ENCODE measurements at regions of chr16 and their contacts with region 1.

Region 1: GRCh38 chr16:81444448-81445121 is at the start of gene CMIP:
- DNase-seq: peak; percentile 81
- H3K4me3 Mint-ChIP-seq: peak within 1 kb of the TSS; percentile 75
- H3K27ac Mint-ChIP-seq: peak within 1 kb of the TSS; percentile 57
- H3K4me1 Mint-ChIP-seq: peaks cover 33% of the 10 kb centered on the region
- H3K27me3 Mint-ChIP-seq: no peaks in the 10 kb centered on the region
- total RNA-seq, gene CMIP: 28.6 to 28.8 TPM

Region 2: GRCh38 chr16:81394966-81395651 is 49.5 kb before region 1 on chr16:
- CTCF ChIA-PET with region 1: no interaction called
- intact Hi-C with region 1: no loop called
- DNase-seq: no peak
- H3K4me3 Mint-ChIP-seq: no peak overlapping the region
- H3K27ac Mint-ChIP-seq: no peak overlapping the region
- H3K4me1 Mint-ChIP-seq: no peaks in the 10 kb centered on the region
- H3K27me3 Mint-ChIP-seq: no peaks in the 10 kb centered on the region

Region 3: DNA sequence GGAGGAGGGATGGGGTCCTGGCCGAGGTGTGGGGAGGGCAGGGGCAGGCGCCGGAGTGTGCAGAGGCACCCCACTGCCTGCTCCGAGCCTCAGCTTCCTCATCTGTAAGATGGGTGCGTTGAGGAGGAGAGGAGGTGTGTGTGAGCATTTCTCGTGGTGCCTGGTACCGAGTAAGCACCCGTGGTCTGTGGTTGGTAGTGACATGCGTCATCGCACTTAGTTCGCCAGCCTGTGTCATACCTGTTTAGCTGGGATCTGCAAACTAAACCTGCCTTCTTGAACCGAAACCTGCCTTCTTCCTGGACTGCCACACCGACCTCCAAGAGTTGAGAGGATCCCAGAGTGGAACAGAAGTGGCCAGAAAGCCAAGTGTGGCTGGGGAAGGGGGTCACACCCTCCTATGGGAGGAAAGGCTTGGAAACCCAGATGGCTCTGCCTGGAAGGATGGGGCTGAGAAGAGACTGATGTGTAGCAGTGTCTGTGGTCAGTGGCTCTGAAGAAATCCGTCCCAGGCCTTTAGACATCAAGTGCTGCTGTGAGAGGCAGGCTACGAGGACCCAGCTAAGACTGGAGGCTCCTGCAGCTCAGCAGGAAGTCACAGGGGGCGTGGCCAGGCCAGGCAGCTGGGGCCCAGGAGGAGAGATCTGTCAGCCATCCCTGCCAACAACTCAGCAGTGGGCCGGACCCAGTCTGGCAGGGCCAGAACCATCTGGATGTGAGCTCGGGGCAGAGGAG is 171.9 kb after region 1 on chr16:
- CTCF ChIA-PET with region 1: no interaction called
- intact Hi-C with region 1: loop called (anchors 1 kb)
- DNase-seq: peak; percentile 90
- H3K4me3 Mint-ChIP-seq: peak overlapping the region; percentile 20
- H3K27ac Mint-ChIP-seq: peak overlapping the region; percentile 83
- H3K4me1 Mint-ChIP-seq: peaks cover 16% of the 10 kb centered on the region
- H3K27me3 Mint-ChIP-seq: no peaks in the 10 kb centered on the region

Region 4: DNA sequence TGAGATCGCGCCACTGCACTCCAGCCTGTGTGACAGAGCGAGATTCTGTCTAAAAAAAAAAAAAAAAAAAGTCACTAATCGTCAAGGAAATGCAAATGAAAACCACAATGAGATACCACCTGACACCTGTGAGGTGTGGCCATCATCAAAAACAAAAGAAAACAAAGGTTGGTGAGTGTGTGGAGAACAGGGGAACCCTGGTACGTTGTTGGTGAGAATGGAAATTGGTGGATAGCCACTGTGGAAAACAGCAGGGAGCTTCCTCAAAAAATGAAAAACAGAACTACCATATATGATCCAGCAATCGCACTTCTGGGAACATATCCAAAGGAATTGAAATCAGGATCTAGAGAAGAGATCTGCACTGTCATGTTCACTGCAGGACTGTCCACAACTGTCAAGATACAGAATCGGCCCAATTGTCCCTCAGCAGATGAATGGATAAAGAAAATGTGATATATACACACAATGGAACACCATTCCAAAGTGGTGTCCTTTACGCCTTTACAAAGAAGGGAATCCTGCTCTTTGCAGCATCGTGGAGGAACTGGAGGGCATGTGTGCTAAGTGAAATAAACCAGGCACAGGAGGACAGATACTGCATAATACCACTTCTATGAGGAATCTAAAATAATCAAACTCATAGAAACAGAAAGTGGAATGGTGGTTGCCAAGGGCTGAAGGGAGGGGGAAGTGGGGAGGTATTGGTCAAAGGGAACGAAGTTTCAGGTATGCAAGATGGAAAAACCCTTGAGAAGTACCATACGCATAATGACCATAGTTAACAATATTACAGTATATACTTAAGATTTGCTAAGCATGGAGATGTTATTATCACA is 271.0 kb after region 1 on chr16:
- CTCF ChIA-PET with region 1: no interaction called
- intact Hi-C with region 1: loop called (anchors 5 kb)
- DNase-seq: peak; percentile 54
- H3K4me3 Mint-ChIP-seq: no peak overlapping the region
- H3K27ac Mint-ChIP-seq: peak overlapping the region; percentile 25
- H3K4me1 Mint-ChIP-seq: peaks cover 37% of the 10 kb centered on the region
- H3K27me3 Mint-ChIP-seq: no peaks in the 10 kb centered on the region

Region 5: GRCh38 chr16:81885976-81886586 is 441.5 kb after region 1 on chr16:
- CTCF ChIA-PET with region 1: no interaction called
- intact Hi-C with region 1: no loop called
- DNase-seq: peak; percentile 35
- H3K4me3 Mint-ChIP-seq: no peak overlapping the region
- H3K27ac Mint-ChIP-seq: no peak overlapping the region
- H3K4me1 Mint-ChIP-seq: no peaks in the 10 kb centered on the region
- H3K27me3 Mint-ChIP-seq: no peaks in the 10 kb centered on the region

Region 6: DNA sequence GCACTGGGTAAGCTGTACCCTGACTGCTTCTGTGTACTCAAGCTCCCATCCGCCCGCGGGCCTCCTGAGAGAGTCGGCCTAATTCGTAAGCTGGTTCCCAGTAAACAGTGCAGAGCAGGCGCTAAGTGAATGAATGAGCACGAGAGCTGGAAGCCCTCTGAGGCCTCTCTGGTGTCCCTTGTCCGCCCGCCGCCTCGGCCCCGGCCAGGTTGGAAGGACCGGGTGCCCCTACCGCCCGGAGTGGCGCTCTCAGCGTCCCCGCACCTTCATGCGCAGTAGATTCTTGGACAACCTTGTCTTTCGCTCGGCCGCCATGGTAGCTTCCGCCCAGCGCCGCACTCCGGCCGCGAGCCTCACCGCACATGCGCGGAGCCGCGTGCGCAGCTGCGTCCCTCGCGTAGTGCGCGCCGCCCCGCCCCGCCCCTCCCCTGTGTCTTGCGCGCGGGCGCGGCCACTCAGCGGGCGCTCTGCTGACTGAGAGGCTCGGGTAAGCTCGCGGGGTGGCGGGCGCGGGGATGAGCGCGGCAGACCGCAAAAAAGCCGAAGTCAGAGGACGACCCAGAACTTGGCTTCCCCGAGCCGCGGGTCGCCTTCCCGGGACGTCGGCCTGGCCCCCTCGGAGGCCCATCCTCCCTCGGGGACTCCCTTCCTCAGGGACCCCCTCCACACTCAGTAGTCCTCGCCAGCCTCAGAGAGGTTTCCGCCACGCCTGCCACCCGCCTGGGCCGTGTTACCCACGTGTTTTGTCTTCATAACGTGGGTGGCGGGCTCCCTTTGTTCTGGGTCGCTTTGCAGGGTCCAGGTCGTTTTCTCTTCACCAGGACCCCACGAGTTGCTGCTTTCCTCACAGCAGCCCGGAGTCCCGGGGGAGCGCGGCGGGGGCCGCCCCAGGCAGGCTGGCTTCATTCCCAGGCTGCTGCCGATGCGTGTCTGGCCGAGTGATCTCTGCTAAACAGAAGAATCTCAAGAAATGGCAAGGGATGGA is 725.6 kb after region 1 on chr16 and contains the start of gene MPHOSPH6:
- CTCF ChIA-PET with region 1: no interaction called
- intact Hi-C with region 1: loop called (anchors 5 kb)
- DNase-seq: peak; percentile 90
- H3K4me3 Mint-ChIP-seq: peak within 1 kb of the TSS; percentile 93
- H3K27ac Mint-ChIP-seq: peak within 1 kb of the TSS; percentile 90
- H3K4me1 Mint-ChIP-seq: peaks cover 22% of the 10 kb centered on the region
- H3K27me3 Mint-ChIP-seq: peaks cover 23% of the 10 kb centered on the region
- total RNA-seq, gene MPHOSPH6: 34.8 to 36.9 TPM

Measured in activated naive CD4-positive, alpha-beta T cell treated with anti-CD3 and anti-CD28 coated beads for 36 hours (primary cell).